Activated CD8-positive, alpha-beta T cell treated with anti-CD3 and anti-CD28 coated beads for 36 hours (primary cell): ENCODE measurements at regions of chr17 and their contacts with region 1.

Region 1: DNA sequence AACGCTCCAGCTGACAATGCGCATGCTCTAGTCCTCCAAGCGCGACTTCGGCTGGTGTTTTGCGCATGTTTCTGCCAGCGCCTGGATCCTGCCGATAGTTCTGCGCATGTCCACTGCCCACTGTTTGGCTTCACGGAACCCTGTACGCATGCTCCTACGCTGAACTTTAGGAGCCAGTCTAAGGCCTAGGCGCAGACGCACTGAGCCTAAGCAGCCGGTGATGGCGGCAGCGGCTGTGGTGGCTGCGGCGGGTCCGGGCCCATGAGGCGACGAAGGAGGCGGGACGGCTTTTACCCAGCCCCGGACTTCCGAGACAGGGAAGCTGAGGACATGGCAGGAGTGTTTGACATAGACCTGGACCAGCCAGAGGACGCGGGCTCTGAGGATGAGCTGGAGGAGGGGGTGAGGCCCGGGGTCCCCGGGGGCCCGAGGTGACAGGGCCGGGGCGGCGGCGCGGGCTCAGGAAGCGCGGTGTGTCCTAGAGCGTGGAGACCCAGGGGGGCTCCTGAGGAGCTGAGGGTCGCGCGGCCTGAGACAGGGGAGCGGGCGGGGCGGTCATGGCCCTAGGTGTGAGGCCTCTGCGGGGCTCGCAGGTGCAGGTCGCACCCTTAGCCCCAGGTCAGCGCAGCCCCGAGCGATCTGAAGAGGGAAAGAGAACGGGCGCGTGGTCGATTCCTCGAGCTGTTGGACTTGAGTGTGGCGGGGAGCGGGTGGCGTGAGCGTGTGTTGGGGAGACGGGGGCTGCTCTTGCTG is at the starts of genes RPS6KB1 and TUBD1:
- DNase-seq: peak; percentile 98
- ATAC-seq: peak; percentile 98
- H3K4me3 Mint-ChIP-seq: peak within 1 kb of the TSS; percentile 93
- H3K27ac Mint-ChIP-seq: peak within 1 kb of the TSS; percentile 98
- H3K4me1 Mint-ChIP-seq: peaks cover 42% of the 10 kb centered on the region
- H3K27me3 Mint-ChIP-seq: no peaks in the 10 kb centered on the region
- CTCF ChIP-seq: no peak
- total RNA-seq, gene RPS6KB1: 39.9 to 44.2 TPM
- total RNA-seq, gene TUBD1: 7.9 to 11.1 TPM

Region 2: DNA sequence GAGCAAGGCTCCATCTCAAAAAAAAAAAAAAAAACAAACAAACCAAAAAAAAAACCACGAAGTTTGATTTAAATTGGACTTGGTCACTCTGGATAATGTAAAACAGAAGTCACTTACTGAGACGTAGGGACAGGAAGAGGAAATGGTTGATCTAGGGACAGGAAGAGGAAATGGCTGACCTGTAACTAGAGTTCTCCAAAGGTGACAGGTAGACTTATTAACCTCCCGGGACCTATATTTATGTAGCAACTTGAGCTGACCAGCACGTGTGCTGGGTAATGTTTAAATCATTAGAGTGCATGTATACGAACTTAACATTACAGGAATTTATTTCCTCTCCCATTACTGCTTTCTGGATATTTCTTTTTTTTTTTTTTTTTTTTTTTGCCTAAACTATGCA is 409.2 kb before region 1 on chr17:
- CTCF ChIA-PET with region 1: no interaction called
- POLR2A ChIA-PET with region 1: no interaction called
- intact Hi-C with region 1: no loop called
- DNase-seq: no peak
- ATAC-seq: no peak
- H3K4me3 Mint-ChIP-seq: no peak overlapping the region
- H3K27ac Mint-ChIP-seq: no peak overlapping the region
- H3K4me1 Mint-ChIP-seq: peaks cover 7% of the 10 kb centered on the region
- H3K27me3 Mint-ChIP-seq: peaks cover 2% of the 10 kb centered on the region
- CTCF ChIP-seq: no peak

Region 3: DNA sequence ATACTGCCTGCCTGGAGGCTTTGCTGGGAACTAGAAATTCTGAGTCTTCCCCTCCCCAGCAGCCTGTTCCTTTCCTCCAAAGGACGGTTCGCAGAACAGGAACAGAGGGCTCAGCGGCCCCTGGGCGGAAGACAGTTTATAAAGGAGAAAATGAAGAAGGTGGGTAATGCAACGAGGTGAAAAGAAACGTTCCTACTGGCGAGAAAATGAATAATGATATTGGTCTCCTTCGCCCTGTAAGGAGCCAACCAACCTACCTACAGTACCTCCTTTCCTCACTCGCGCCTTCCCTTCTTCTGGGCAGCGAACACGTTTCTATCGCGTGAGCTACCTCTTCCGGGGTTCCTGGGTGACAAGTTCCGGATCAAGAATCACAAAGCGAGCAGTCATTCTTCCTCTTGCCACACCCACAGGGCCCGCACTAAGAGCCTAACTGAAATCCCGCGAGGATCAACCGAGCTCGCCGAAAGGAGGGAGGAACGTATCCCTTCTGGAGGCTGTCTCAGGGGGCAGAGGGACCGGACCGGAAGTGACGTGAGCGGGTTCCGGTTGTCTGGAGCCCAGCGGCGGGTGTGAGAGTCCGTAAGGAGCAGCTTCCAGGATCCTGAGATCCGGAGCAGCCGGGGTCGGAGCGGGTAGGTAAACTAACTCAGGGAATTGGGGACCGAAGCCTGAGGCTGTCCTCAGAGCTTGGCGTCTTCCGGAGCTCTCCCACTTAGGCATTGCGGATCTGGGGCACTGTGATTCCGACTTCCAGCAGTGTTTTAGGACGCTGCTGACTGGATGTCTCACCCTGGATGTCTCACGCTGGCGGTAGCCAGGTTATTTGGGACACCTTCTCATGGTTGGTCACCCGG is 185.8 kb before region 1 on chr17 and contains the starts of genes PTRH2 and VMP1:
- CTCF ChIA-PET with region 1: no interaction called
- POLR2A ChIA-PET with region 1: interaction called, 11 read pairs
- intact Hi-C with region 1: no loop called
- DNase-seq: peak; percentile 97
- ATAC-seq: peak; percentile 99
- H3K4me3 Mint-ChIP-seq: peak within 1 kb of the TSS; percentile 95
- H3K27ac Mint-ChIP-seq: peak within 1 kb of the TSS; percentile 97
- H3K4me1 Mint-ChIP-seq: peaks cover 46% of the 10 kb centered on the region
- H3K27me3 Mint-ChIP-seq: no peaks in the 10 kb centered on the region
- CTCF ChIP-seq: no peak
- total RNA-seq, gene PTRH2: 34.2 to 37.4 TPM
- total RNA-seq, gene VMP1: 239 to 248 TPM

Region 4: GRCh38 chr17:60445144-60445543 is 552.0 kb after region 1 on chr17:
- CTCF ChIA-PET with region 1: no interaction called
- POLR2A ChIA-PET with region 1: no interaction called
- intact Hi-C with region 1: no loop called
- DNase-seq: no peak
- ATAC-seq: no peak
- H3K4me3 Mint-ChIP-seq: no peak overlapping the region
- H3K27ac Mint-ChIP-seq: no peak overlapping the region
- H3K4me1 Mint-ChIP-seq: no peaks in the 10 kb centered on the region
- H3K27me3 Mint-ChIP-seq: no peaks in the 10 kb centered on the region
- CTCF ChIP-seq: no peak